Naive thymus-derived CD4-positive, alpha-beta T cell (primary cell): ENCODE measurements at regions of chr13 and their contacts with region 1.

Region 1: GRCh38 chr13:41310963-41311606 is at the start of gene NAA16:
- DNase-seq: peak; percentile 91 to 99 (median 94)
- ATAC-seq: peak; percentile 91
- H3K4me3 ChIP-seq: peak within 1 kb of the TSS; percentile 97
- H3K4me3 Mint-ChIP-seq: peak within 1 kb of the TSS; percentile 80 to 99 (median 98)
- H3K27ac ChIP-seq: peak within 1 kb of the TSS; percentile 91
- H3K27ac Mint-ChIP-seq: peak within 1 kb of the TSS; percentile 76 to 96 (median 95)
- H3K4me1 ChIP-seq: peaks cover 25 to 29% of the 10 kb centered on the region in 2 donors
- H3K4me1 Mint-ChIP-seq: peaks cover 14 to 55% (median 41%) of the 10 kb centered on the region in 7 donors
- H3K27me3 ChIP-seq: no peaks in the 10 kb centered on the region
- H3K27me3 Mint-ChIP-seq: no peaks in the 10 kb centered on the region
- total RNA-seq, gene NAA16: 30.6 to 99.6 (median 90.4) TPM

Region 2: DNA sequence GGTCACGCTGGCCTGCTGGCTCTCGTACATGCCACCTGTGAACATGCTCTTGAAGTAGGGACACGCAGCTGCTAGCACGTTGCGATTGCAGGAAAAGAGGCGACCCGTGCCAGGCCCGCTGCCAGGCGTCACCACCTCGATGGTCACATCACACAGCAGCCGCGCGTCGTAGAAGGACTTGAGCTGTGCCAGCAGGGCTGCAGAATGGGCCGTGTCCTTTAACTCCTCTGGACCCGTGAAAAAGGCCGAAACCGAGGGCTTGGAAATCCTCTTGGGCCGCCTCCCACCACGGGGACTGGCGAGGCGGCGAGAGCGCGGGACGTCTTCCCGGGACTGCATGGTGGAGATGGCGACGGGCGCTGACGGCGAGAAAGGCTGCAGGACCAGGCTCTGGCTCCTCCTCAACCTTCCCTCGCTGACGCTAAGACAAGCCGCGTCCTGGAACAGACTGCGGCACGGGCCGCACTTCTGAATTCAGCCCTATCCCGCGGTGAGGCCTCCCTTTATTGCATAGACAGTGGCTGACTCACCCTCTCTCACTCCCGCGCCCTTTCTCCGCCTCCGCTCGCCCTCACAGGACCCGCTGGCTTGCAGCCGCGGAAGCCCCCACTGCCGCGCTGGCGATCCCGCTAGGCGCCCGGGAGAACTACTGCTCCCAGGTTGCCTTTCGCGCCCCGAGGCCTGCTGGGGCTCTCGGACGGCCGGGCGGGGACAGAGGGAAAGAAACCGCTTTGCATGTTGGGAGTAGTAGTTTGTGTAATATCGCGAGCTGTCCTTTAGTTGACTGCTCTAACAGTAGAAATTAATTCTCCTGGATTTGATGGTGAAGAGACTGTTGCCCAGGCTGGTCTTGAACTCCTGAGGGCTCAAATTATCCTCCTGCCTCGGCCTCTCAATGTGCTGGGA is 116.9 kb before region 1 on chr13 and contains the start of gene KBTBD7:
- CTCF ChIA-PET with region 1: no interaction called
- POLR2A ChIA-PET with region 1: no interaction called
- intact Hi-C with region 1: loop called (anchors 1 to 2 kb)
- DNase-seq: peak; percentile 78 to 94 (median 83)
- ATAC-seq: peak; percentile 98
- H3K4me3 ChIP-seq: peak within 1 kb of the TSS; percentile 85
- H3K4me3 Mint-ChIP-seq: peak within 1 kb of the TSS; percentile 87 to 98 (median 94)
- H3K27ac ChIP-seq: peak within 1 kb of the TSS; percentile 70
- H3K27ac Mint-ChIP-seq: peak within 1 kb of the TSS; percentile 79 to 94 (median 90)
- H3K4me1 ChIP-seq: peaks cover 0 to 13% of the 10 kb centered on the region in 2 donors
- H3K4me1 Mint-ChIP-seq: peaks cover 25 to 50% (median 41%) of the 10 kb centered on the region in 7 donors
- H3K27me3 ChIP-seq: no peaks in the 10 kb centered on the region
- H3K27me3 Mint-ChIP-seq: no peaks in the 10 kb centered on the region
- total RNA-seq, gene KBTBD7: 2.8 to 12.9 (median 11.5) TPM

Region 3: DNA sequence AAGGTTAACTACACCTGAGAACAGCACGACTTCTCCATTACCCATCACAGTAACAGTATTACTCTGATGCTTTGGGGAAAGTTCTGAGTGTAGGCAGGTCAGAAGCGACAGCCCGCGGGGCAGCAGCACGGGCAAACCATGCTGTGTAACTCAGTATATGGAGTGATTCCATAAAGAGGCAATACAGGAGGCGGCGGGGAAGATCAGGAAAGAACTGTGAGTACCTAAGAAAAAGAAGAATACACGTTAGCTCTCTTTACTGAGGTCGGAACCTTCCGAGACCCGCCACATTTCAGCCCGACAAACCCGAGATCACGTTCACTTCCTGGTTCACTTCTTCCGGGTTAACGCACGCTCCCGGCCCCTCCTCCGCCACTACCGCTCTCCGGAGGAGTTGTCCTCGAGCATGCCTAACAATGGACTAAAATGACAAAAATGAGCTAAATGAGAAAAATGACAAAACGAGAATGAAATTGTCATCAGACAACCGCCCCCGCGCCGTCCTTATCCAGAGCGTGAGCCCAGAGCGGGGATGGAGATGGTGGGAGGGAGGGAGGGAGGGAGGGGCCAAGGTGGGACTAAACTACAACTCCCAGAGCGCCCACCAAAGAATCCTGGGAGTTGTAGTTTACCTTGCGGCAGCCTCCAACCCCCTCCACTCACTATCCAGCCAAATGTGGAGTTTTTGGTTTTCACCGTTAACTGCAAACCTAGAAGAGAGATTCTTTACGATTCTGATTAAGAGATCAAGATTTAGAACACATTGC is 47.6 kb before region 1 on chr13 and contains the start of gene MTRF1:
- CTCF ChIA-PET with region 1: no interaction called
- POLR2A ChIA-PET with region 1: interaction called, 9 read pairs
- intact Hi-C with region 1: loop called (anchors 1 kb)
- DNase-seq: peak; percentile 70 to 91 (median 88)
- ATAC-seq: peak; percentile 94
- H3K4me3 ChIP-seq: peak within 1 kb of the TSS; percentile 76
- H3K4me3 Mint-ChIP-seq: peak within 1 kb of the TSS; percentile 84 to 100 (median 96)
- H3K27ac ChIP-seq: peak within 1 kb of the TSS; percentile 79
- H3K27ac Mint-ChIP-seq: peak within 1 kb of the TSS; percentile 92 to 99 (median 96)
- H3K4me1 ChIP-seq: peaks cover 0 to 3% of the 10 kb centered on the region in 2 donors
- H3K4me1 Mint-ChIP-seq: peaks cover 10 to 61% (median 28%) of the 10 kb centered on the region in 7 donors
- H3K27me3 ChIP-seq: no peaks in the 10 kb centered on the region
- H3K27me3 Mint-ChIP-seq: no peaks in the 10 kb centered on the region
- total RNA-seq, gene MTRF1: 21.7 to 38.2 (median 30.9) TPM

Region 4: GRCh38 chr13:41284512-41285288 is 26.4 kb before region 1 on chr13:
- CTCF ChIA-PET with region 1: interaction called, 3 read pairs
- POLR2A ChIA-PET with region 1: interaction called, 7 read pairs
- intact Hi-C with region 1: loop called in 1 of 2 experiments (anchors 1 kb)
- DNase-seq: no peak
- ATAC-seq: no peak
- H3K4me3 ChIP-seq: no peak overlapping the region
- H3K4me3 Mint-ChIP-seq: peak overlapping the region in 4 of 10 donors; percentile 15 to 77 (median 47)
- H3K27ac ChIP-seq: no peak overlapping the region
- H3K27ac Mint-ChIP-seq: peak overlapping the region in 5 of 9 donors; percentile 81 to 96 (median 95)
- H3K4me1 ChIP-seq: peaks cover 0 to 31% of the 10 kb centered on the region in 2 donors
- H3K4me1 Mint-ChIP-seq: peaks cover 8 to 63% (median 39%) of the 10 kb centered on the region in 7 donors
- H3K27me3 ChIP-seq: no peaks in the 10 kb centered on the region
- H3K27me3 Mint-ChIP-seq: no peaks in the 10 kb centered on the region

Region 5: GRCh38 chr13:41365631-41366030 is 54.5 kb after region 1 on chr13:
- CTCF ChIA-PET with region 1: no interaction called
- POLR2A ChIA-PET with region 1: no interaction called
- intact Hi-C with region 1: no loop called
- DNase-seq: no peak
- ATAC-seq: no peak
- H3K4me3 ChIP-seq: no peak overlapping the region
- H3K4me3 Mint-ChIP-seq: no peak overlapping the region
- H3K27ac ChIP-seq: no peak overlapping the region
- H3K27ac Mint-ChIP-seq: peak overlapping the region in 3 of 9 donors; percentile 49 to 76 (median 49)
- H3K4me1 ChIP-seq: no peaks in the 10 kb centered on the region
- H3K4me1 Mint-ChIP-seq: peaks cover 3 to 67% (median 43%) of the 10 kb centered on the region in 7 donors
- H3K27me3 ChIP-seq: no peaks in the 10 kb centered on the region
- H3K27me3 Mint-ChIP-seq: no peaks in the 10 kb centered on the region

Region 6: DNA sequence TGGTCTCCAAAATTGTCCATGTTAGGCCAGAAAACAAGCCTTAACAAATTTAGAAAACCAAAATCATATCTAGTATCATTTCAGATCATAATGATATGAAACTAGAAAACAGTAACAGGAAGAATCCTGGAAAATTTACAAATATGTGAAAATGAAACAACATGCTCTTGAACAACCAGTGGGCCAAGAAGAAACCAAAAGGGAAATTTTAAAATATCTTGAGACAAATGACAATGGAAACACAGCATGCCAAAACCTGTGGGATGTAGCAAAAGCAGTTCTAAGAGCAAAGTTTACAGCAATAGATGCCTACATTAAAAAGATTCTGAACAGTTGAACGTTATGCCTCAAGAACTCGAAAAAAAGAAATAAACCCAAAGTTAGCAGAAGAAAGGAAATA is 617.2 kb after region 1 on chr13:
- CTCF ChIA-PET with region 1: no interaction called
- POLR2A ChIA-PET with region 1: no interaction called
- intact Hi-C with region 1: loop called in 1 of 2 experiments (anchors 5 kb)
- DNase-seq: no peak
- ATAC-seq: no peak
- H3K4me3 ChIP-seq: no peak overlapping the region
- H3K4me3 Mint-ChIP-seq: peak overlapping the region; percentile 2 to 79 (median 71)
- H3K27ac ChIP-seq: no peak overlapping the region
- H3K27ac Mint-ChIP-seq: peak overlapping the region in 8 of 9 donors; percentile 2 to 67 (median 48)
- H3K4me1 ChIP-seq: peaks cover 0 to 6% of the 10 kb centered on the region in 2 donors
- H3K4me1 Mint-ChIP-seq: peaks cover 16 to 47% (median 39%) of the 10 kb centered on the region in 7 donors
- H3K27me3 ChIP-seq: no peaks in the 10 kb centered on the region
- H3K27me3 Mint-ChIP-seq: no peaks in the 10 kb centered on the region